PC-3 (cell line): ENCODE measurements at regions of chrX and their contacts with region 1.

Region 1: DNA sequence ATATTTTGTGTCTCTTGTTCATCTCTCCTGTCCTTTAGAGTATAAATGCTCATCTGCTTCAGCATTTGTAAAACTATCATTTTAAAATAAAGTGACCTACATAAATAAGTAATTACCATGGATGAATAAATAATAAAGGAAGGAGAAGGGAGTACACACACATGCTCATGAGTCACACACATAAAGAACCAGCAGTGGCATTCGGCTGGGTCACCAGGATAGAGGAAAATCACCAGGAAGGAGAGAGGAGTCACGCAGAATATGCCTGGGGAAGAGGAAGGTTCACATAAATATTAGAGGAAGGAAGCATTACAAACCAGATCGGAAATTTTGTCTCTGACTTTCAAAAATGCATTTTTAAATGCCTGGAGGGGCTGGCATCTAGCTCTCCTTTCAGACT is 38.5 kb upstream of the MED14 start:
- DNase-seq: peak; percentile 81
- ATAC-seq: peak; percentile 86
- H3K4me3 ChIP-seq: peak overlapping the region; percentile 37
- H3K27ac ChIP-seq: peak overlapping the region; percentile 98
- H3K4me1 ChIP-seq: peaks cover 37% of the 10 kb centered on the region
- H3K27me3 ChIP-seq: no peaks in the 10 kb centered on the region
- CTCF ChIP-seq: no peak

Region 2: DNA sequence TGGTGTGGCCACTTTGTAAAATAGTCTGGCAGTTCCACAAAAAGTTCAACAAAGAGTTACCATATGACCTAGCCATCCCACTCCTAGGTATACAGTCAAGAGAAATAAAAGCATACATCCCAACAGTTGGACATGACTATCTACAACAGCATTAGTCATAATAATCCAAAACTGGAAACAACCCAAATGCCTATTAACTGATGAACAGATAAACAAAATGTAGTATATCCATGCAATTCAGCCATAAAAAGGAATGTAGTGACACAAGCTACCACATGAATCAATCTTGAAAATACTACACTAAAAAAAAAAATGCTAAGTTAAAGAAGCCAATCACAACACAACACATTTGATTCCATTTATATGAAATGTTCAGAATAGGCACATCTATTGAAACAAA is 54.6 kb before region 1 on chrX:
- CTCF ChIA-PET with region 1: no interaction called
- POLR2A ChIA-PET with region 1: no interaction called
- intact Hi-C with region 1: loop called (anchors 1 kb)
- DNase-seq: peak; percentile 90
- ATAC-seq: peak; percentile 81
- H3K4me3 ChIP-seq: peak overlapping the region; percentile 19; the same call in 1 of the 2 replicates
- H3K27ac ChIP-seq: peak overlapping the region; percentile 84
- H3K4me1 ChIP-seq: peaks cover 27% of the 10 kb centered on the region
- H3K27me3 ChIP-seq: no peaks in the 10 kb centered on the region
- CTCF ChIP-seq: no peak

Region 3: GRCh38 chrX:40729598-40730584 is 43.9 kb before region 1 on chrX:
- CTCF ChIA-PET with region 1: interaction called, 13 read pairs
- POLR2A ChIA-PET with region 1: no interaction called
- intact Hi-C with region 1: no loop called
- DNase-seq: no peak
- ATAC-seq: no peak
- H3K4me3 ChIP-seq: no peak overlapping the region
- H3K27ac ChIP-seq: no peak overlapping the region
- H3K4me1 ChIP-seq: no peaks in the 10 kb centered on the region; the same call in 1 of the 2 replicates
- H3K27me3 ChIP-seq: no peaks in the 10 kb centered on the region
- CTCF ChIP-seq: no peak

Region 4: GRCh38 chrX:40784516-40785151 is 10.8 kb after region 1 on chrX:
- CTCF ChIA-PET with region 1: no interaction called
- POLR2A ChIA-PET with region 1: interaction called, 19 read pairs
- intact Hi-C with region 1: no loop called
- DNase-seq: peak; percentile 81
- ATAC-seq: peak; percentile 87
- H3K4me3 ChIP-seq: no peak overlapping the region
- H3K27ac ChIP-seq: peak overlapping the region; percentile 86
- H3K4me1 ChIP-seq: peaks cover 22% of the 10 kb centered on the region
- H3K27me3 ChIP-seq: no peaks in the 10 kb centered on the region
- CTCF ChIP-seq: no peak